Activated CD4-positive, alpha-beta memory T cell treated with anti-CD3 and anti-CD28 coated beads for 36 hours (primary cell): ENCODE measurements at regions of chr7 and their contacts with region 1.

Region 1: GRCh38 chr7:128343554-128344430 is at the start of gene RBM28:
- DNase-seq: peak; percentile 92
- H3K4me3 Mint-ChIP-seq: peak within 1 kb of the TSS; percentile 92
- H3K27ac Mint-ChIP-seq: peak within 1 kb of the TSS; percentile 88
- H3K4me1 Mint-ChIP-seq: peaks cover 24% of the 10 kb centered on the region
- H3K27me3 Mint-ChIP-seq: peaks cover 2% of the 10 kb centered on the region
- total RNA-seq, gene RBM28: 46.2 to 56.0 TPM

Region 2: DNA sequence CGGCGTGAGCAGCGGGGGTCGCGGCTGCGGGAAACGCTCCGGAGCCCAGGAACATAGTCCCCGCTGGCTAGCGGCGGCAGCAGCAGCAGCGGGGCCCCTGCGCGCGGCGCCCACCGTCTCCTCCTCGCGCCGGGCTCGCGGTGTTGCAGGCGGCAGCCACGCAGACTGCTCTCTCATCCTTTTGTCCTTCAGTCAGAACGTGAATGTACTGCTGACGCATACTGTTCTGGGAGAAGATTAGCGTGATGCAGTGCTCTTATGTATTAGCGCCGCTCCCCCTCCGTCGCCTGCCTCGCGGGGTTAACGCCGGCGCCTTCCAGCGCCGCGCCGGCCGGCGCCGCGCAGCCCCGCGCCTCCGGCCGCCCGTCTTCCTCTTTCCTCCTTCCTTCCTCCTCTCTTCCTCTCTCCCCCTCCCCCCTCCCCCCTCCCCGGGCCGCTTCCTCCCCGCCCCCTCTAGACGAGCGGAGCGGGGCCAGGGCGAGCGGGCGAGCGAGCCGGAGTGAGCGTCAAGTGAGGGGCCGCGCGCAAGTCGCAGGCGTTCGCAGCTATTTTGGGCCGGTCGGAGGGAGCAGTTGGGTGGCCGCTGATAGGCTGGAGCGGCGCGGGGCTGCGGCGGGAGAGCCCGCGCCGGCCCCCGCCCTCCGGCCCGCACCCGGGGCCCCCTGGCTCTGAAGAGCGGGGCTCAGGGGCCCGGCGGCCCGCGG is 311.7 kb before region 1 on chr7:
- CTCF ChIA-PET with region 1: no interaction called
- POLR2A ChIA-PET with region 1: no interaction called
- intact Hi-C with region 1: loop called (anchors 5 kb)
- DNase-seq: peak; percentile 76
- H3K4me3 Mint-ChIP-seq: peak overlapping the region; percentile 72
- H3K27ac Mint-ChIP-seq: no peak overlapping the region
- H3K4me1 Mint-ChIP-seq: peaks cover 17% of the 10 kb centered on the region
- H3K27me3 Mint-ChIP-seq: no peaks in the 10 kb centered on the region

Region 3: GRCh38 chr7:128361411-128362379 is 17.9 kb after region 1 on chr7 and contains the start of gene PRRT4:
- CTCF ChIA-PET with region 1: interaction called, 25 read pairs
- POLR2A ChIA-PET with region 1: interaction called, 5 read pairs
- intact Hi-C with region 1: loop called (anchors 2 kb)
- DNase-seq: peak; percentile 48
- H3K4me3 Mint-ChIP-seq: peak within 1 kb of the TSS; percentile 69
- H3K27ac Mint-ChIP-seq: no peak within 1 kb of the TSS
- H3K4me1 Mint-ChIP-seq: peaks cover 21% of the 10 kb centered on the region
- H3K27me3 Mint-ChIP-seq: peaks cover 42% of the 10 kb centered on the region
- total RNA-seq, gene PRRT4: 0.10 to 0.12 TPM

Region 4: GRCh38 chr7:128373606-128374005 is 29.8 kb after region 1 on chr7:
- CTCF ChIA-PET with region 1: interaction called, 507 read pairs
- POLR2A ChIA-PET with region 1: no interaction called
- intact Hi-C with region 1: no loop called
- DNase-seq: no peak
- H3K4me3 Mint-ChIP-seq: no peak overlapping the region
- H3K27ac Mint-ChIP-seq: no peak overlapping the region
- H3K4me1 Mint-ChIP-seq: no peaks in the 10 kb centered on the region
- H3K27me3 Mint-ChIP-seq: no peaks in the 10 kb centered on the region

Region 5: DNA sequence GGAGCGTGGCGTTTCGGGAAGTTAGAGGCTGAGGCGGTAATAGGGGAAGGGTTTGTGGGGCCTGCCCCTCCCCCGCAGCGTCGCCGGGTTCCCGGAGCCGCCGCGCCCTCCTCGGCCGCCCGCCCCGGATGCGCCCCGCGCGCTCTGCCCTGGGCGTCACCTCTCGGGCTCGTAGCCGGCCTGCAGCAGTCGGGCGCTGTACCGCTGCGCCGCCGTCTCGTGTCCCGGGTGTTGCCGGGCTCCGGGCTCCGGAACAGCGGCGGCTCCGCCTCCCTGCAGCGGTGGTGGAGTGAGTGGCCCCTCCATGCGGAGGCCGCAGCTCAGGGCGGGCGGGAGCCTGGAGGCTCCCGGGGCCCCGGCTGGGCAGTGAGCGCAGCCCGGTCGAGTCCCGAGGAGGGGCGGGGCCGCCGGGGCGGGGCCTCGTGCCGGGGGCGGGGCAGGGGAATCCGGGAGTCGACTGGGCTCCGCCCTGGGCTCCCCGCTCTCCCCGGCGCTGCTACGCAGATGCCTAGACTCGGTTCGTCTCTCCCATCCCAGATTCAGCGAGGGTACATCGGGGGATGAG is 65.9 kb after region 1 on chr7 and contains the start of gene IMPDH1:
- CTCF ChIA-PET with region 1: interaction called, 14 read pairs
- POLR2A ChIA-PET with region 1: interaction called, 3 read pairs
- intact Hi-C with region 1: no loop called
- DNase-seq: peak; percentile 90
- H3K4me3 Mint-ChIP-seq: peak within 1 kb of the TSS; percentile 84
- H3K27ac Mint-ChIP-seq: peak within 1 kb of the TSS; percentile 60
- H3K4me1 Mint-ChIP-seq: peaks cover 28% of the 10 kb centered on the region
- H3K27me3 Mint-ChIP-seq: peaks cover 3% of the 10 kb centered on the region
- total RNA-seq, gene IMPDH1: 52.9 to 57.7 TPM

Region 6: GRCh38 chr7:128462460-128462859 is 118.7 kb after region 1 on chr7:
- CTCF ChIA-PET with region 1: interaction called, 12 read pairs
- POLR2A ChIA-PET with region 1: no interaction called
- intact Hi-C with region 1: loop called (anchors 1 kb)
- DNase-seq: no peak
- H3K4me3 Mint-ChIP-seq: no peak overlapping the region
- H3K27ac Mint-ChIP-seq: no peak overlapping the region
- H3K4me1 Mint-ChIP-seq: peaks cover 24% of the 10 kb centered on the region
- H3K27me3 Mint-ChIP-seq: no peaks in the 10 kb centered on the region